Endothelial cell of umbilical vein (primary cell): ENCODE measurements at regions of chr21 and their contacts with region 1.

Region 1: DNA sequence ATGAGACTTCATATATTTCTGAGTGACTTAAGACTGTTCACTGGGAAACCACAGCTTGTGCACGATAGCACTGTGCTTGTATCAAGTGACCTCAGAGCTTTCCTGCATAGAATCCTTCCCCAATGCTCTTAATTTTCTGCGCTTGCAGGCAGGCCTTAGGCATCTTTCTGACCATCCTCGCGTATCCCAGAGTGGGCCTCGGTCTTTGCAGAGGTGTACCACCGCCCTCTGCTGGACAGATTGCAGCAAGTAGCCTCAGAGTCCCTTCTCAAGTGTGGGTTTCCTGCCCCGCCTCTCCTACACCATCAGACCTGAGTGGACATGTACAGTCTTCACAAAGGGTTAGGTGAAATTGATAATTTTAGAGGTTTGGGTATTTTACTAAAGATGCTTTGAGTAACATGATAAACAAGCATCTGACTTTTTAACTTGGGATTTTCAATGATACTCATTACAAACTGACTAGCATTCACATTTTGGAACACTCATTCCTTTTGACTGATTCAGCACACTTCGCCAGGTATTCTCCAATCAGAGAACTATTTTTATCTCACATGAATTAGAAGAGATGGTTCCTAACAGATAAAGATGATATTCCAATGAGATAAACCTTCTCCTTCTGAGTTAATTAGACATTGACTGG is 246.5 kb upstream of the USP25 start:
- DNase-seq: peak; percentile 84
- H3K4me3 ChIP-seq: no peak overlapping the region
- H3K27ac ChIP-seq: no peak overlapping the region
- H3K4me1 ChIP-seq: no peaks in the 10 kb centered on the region
- H3K27me3 ChIP-seq: peaks cover 1 to 6% of the 10 kb centered on the region in 2 experiments
- CTCF ChIP-seq: peak; percentile 88 to 89
- POLR2A ChIP-seq: no peak

Region 2: GRCh38 chr21:14403681-14404318 is 1079.5 kb before region 1 on chr21:
- CTCF ChIA-PET with region 1: interaction called, 7 read pairs
- POLR2A ChIA-PET with region 1: no interaction called
- dilution Hi-C with region 1: no loop called
- intact Hi-C with region 1: loop called (anchors 5 kb)
- DNase-seq: peak; percentile 45
- H3K4me3 ChIP-seq: no peak overlapping the region
- H3K27ac ChIP-seq: no peak overlapping the region
- H3K4me1 ChIP-seq: no peaks in the 10 kb centered on the region
- H3K27me3 ChIP-seq: no peaks in the 10 kb centered on the region
- CTCF ChIP-seq: peak; percentile 33 to 49
- POLR2A ChIP-seq: no peak

Region 3: DNA sequence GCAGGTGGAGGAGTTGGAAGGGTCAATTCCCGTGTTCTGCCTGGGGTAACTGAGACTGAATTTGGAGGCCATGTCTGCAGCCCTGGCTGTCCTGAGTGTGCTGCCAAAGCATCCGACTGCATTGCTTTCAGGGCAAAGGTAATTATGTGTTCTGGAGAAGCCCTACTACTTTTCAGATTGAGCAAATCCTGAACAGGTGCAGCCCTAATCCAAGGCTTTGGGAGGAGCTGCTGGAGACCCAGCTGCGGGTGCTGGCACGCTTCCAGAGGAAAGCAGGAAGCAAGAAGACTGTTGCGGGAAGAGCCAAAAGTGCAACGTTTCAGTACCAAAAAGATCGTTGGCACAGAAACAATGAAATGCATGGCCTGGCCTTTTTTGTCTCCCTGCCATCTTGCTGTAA is 344.8 kb before region 1 on chr21:
- CTCF ChIA-PET with region 1: no interaction called
- POLR2A ChIA-PET with region 1: no interaction called
- dilution Hi-C with region 1: no loop called
- intact Hi-C with region 1: loop called (anchors 10 kb)
- DNase-seq: no peak
- H3K4me3 ChIP-seq: no peak overlapping the region
- H3K27ac ChIP-seq: no peak overlapping the region
- H3K4me1 ChIP-seq: peaks cover 3% of the 10 kb centered on the region
- H3K27me3 ChIP-seq: peaks cover 6 to 11% of the 10 kb centered on the region in 2 experiments
- CTCF ChIP-seq: no peak
- POLR2A ChIP-seq: no peak

Region 4: GRCh38 chr21:15422783-15423182 is 60.5 kb before region 1 on chr21:
- CTCF ChIA-PET with region 1: no interaction called
- POLR2A ChIA-PET with region 1: no interaction called
- dilution Hi-C with region 1: no loop called
- intact Hi-C with region 1: no loop called
- DNase-seq: no peak
- H3K4me3 ChIP-seq: no peak overlapping the region
- H3K27ac ChIP-seq: no peak overlapping the region
- H3K4me1 ChIP-seq: no peaks in the 10 kb centered on the region
- H3K27me3 ChIP-seq: no peaks in the 10 kb centered on the region
- CTCF ChIP-seq: no peak
- POLR2A ChIP-seq: no peak

Region 5: DNA sequence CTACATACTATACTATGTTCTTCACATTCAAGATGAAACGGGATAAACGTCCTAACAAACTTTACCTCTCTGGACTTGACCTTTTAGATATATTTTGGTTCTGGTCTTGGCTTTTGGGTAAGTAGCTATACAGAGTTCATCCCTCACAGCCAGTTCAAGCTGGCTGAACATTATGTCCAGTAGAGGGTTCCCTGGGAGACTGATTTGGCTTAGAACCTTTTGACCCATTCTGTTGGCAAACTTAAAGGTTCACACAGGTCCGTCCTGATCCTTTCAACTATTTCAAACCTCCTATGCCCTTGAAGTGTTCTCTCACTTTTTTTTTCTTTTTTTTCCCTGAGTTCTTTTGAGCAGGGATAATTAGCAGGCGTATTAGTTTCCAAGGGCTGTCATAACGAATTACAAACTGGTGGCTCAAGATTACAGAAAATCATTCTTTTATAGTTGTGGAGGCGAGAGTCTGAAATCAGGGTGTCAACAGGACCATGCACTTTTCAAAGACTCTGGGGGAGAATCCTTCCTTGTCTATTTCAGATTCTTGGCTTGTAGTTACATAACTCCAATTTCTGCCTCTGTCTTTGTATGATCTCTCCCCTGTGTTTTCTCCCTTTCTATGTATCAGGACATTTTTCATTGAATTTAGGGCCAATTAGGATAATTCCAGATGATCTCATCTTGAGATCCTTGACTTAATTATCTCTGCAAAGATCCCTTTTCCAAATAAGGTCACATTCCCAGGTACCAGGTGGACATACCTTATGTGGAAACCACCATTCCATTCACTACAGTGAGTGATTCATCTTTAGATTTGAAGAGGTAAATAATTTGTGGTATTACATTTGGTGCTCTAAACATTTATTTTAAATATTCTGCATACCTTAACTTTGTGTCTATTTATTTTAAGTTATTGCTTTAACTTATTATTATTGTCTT is 10.9 kb before region 1 on chr21:
- CTCF ChIA-PET with region 1: interaction called, 12 read pairs
- POLR2A ChIA-PET with region 1: no interaction called
- dilution Hi-C with region 1: no loop called
- intact Hi-C with region 1: no loop called
- DNase-seq: no peak
- H3K4me3 ChIP-seq: no peak overlapping the region
- H3K27ac ChIP-seq: no peak overlapping the region
- H3K4me1 ChIP-seq: no peaks in the 10 kb centered on the region
- H3K27me3 ChIP-seq: no peaks in the 10 kb centered on the region
- CTCF ChIP-seq: no peak
- POLR2A ChIP-seq: no peak

Region 6: GRCh38 chr21:15631366-15631765 is 148.1 kb after region 1 on chr21:
- CTCF ChIA-PET with region 1: no interaction called
- POLR2A ChIA-PET with region 1: no interaction called
- dilution Hi-C with region 1: no loop called
- intact Hi-C with region 1: no loop called
- DNase-seq: peak; percentile 38
- H3K4me3 ChIP-seq: no peak overlapping the region
- H3K27ac ChIP-seq: no peak overlapping the region
- H3K4me1 ChIP-seq: no peaks in the 10 kb centered on the region
- H3K27me3 ChIP-seq: no peaks in the 10 kb centered on the region
- CTCF ChIP-seq: no peak
- POLR2A ChIP-seq: no peak